ENCODE measurements at regions of chr3 and their contacts with region 1.

Region 1: DNA sequence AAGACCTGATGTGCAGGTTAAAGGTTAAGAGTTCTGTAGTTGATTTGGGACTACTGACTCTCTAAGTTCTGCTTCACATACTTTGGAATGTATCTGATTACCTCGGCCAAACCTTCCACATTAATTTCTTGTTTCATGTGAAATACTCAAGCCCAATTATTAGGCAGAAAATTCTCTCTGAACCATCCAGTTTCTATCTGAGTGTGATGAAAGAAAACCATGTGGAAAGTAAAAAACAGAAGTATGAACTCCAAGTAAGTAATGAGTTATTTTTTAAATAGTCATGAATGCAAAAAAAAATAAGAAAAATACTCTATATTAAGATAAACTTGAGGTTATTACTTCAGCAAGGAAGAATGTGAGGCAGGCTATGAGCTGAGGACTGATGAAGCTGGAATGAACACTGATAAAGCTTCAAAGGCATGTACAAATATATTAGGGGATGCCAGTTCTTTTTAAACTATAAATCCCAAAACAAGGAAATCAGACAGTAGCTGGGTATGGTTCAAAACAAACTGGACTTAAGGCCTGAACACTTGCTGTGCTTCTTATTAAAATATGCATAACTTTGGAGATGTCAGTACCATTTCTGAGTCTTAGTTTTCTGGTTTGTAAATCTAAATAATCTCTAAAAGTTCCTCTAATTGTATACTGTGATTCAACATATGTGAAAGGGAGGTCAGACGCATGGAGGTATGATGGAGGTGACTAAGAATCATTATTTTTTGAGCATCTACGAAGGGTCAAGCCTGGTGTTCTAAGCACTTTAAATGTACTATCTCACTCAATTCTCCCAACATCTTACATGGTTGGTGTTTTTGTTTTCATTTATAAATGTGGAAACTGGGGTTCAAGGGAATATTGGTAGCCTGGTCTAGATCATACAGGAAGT is 59.6 kb downstream of the COL6A6 start:
- DNase-seq: no peak
- H3K4me3 ChIP-seq: no peak overlapping the region
- H3K27ac ChIP-seq: peak overlapping the region; percentile 1 to 26
- H3K4me1 ChIP-seq: peaks cover 0 to 17% of the 10 kb centered on the region in 2 donors
- H3K27me3 ChIP-seq: no peaks in the 10 kb centered on the region
- CTCF ChIP-seq: no peak

Region 2: DNA sequence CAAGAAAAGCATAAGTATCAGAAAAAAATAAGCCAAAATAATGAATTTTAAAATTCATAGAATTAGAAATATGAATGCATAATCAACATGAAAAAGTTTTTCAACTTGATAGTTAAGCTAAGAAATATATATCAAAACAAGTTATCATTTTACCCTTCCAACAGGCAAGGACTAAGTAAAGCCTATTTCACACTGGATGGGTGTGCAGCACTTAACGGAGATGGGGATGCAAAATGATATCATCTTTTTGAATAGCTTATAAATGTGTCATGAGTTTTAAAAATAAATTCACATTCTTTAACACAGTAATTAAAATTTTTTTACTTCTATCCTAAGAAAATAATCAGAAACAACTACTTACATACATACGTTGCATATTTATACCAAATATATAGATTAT is 149.1 kb after region 1 on chr3:
- intact Hi-C with region 1: loop called (anchors 10 kb)
- DNase-seq: no peak
- H3K4me3 ChIP-seq: no peak overlapping the region
- H3K27ac ChIP-seq: no peak overlapping the region
- H3K4me1 ChIP-seq: peaks cover 0 to 7% of the 10 kb centered on the region in 2 donors
- H3K27me3 ChIP-seq: no peaks in the 10 kb centered on the region
- CTCF ChIP-seq: no peak

Measured in ascending aorta (tissue), 2 donors.